ENCODE measurements at regions of chr3 and their contacts with region 1.

Region 1: DNA sequence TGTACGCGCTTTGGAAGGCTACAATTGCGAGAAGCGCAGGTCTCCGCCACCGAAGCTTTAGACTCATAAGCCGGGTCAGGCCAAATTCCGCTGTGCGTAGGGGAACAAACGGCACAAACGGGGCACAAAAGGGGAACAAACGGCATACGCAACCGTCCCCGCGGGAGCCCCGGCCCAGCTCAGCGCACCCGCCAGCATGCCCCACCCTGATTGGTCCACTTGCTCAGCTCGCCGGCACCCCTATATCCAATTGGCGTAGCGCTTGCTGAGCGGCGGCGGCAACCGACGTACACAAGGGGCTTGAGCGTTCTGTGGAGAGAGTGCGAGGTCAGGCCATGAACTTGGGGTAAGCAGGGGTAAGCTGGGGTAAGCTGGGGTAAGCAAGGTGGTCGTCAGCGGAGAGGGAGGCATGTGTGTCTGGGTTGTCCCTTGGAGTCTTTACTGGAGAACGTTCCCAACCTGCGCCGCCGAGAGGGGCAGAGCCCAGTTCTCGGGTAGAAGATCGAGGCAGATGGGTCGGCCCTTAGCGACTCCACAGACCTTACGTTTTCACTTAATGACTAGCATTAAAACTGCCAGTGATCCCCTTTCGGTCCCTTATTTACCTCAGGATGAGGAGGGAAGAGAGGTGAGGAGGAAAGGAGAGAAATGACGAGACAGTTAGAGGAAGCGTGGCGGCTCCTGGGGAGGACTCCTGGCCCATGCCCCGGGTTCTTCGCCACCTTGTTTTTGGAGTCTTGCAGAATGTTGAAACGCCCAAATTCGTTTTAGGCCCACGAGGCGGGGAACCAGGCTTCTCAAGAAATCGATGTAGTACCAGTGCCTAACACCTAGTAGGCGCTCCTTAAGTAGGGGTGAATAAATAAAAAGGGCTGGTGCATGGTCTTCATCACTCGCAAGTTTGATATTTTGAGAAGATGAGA is at the start of gene CCDC66:
- DNase-seq: peak; percentile 96
- ATAC-seq: peak; percentile 100
- H3K4me3 Mint-ChIP-seq: peak within 1 kb of the TSS; percentile 98
- H3K27ac Mint-ChIP-seq: peak within 1 kb of the TSS; percentile 99
- H3K4me1 Mint-ChIP-seq: peaks cover 15% of the 10 kb centered on the region
- H3K27me3 Mint-ChIP-seq: peaks cover 5% of the 10 kb centered on the region
- total RNA-seq, gene CCDC66: 25.0 to 26.2 TPM

Region 2: GRCh38 chr3:56593455-56594158 is 36.4 kb after region 1 on chr3:
- CTCF ChIA-PET with region 1: interaction called, 15 read pairs
- POLR2A ChIA-PET with region 1: interaction called, 6 read pairs
- DNase-seq: peak; percentile 77
- ATAC-seq: peak; percentile 99
- H3K4me3 Mint-ChIP-seq: peak overlapping the region; percentile 15
- H3K27ac Mint-ChIP-seq: peak overlapping the region; percentile 80
- H3K4me1 Mint-ChIP-seq: peaks cover 26% of the 10 kb centered on the region
- H3K27me3 Mint-ChIP-seq: no peaks in the 10 kb centered on the region

Region 3: DNA sequence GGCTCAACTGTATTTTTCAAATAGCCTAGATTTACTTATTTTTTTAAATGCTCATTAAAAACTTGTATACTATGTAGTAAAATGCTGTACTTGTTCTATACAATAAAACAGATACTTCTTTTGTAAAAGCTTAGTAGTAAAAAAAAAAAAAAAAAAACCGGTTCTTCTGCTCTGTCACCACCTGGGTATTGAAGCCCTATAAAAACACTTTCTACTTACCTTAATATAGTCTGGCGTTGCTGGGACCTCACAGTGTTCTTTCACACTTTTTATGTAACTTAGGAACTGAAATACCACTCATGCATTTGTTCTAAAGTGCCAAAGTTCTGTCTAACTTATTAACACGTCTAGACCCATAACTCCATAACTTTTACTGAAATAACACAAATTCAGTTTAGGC is 64.5 kb after region 1 on chr3:
- CTCF ChIA-PET with region 1: interaction called, 6 read pairs
- POLR2A ChIA-PET with region 1: interaction called, 13 read pairs
- DNase-seq: no peak
- ATAC-seq: no peak
- H3K4me3 Mint-ChIP-seq: no peak overlapping the region
- H3K27ac Mint-ChIP-seq: no peak overlapping the region
- H3K4me1 Mint-ChIP-seq: peaks cover 5% of the 10 kb centered on the region
- H3K27me3 Mint-ChIP-seq: no peaks in the 10 kb centered on the region